ENCODE measurements at regions of chr11 and their contacts with region 1.

Region 1: DNA sequence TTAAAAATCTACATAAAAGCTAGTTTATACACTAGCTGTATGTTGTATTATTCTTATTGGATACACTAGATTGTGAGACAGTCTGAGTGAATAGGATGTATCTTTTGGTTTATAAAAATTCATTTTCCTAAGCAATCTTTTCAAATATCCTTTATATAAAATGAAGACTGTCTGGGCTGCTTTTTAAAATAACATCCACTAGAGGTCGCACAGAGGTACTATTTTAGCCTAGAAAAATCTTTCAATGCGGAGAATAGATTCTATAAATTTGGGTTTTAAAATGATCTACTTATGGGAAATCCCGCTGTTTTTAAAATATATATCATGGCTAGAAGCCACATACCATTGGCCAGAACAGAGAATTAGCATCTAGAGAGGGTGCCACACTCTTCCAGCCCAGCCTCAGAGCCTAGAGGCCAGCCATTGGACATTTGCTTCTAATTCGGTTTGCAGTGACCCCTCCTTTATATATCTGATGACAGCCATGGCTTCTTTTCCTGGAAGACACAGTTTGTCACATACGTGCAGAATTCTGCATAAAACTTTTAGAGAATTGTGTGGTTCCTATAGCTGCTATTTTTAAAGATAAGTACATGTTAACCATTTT is 7.3 kb downstream of the C11orf97 start:
- DNase-seq: no peak
- H3K4me3 ChIP-seq: no peak overlapping the region
- CTCF ChIP-seq: peak; percentile 10

Region 2: GRCh38 chr11:94537031-94537600 is 17.5 kb after region 1 on chr11:
- CTCF ChIA-PET with region 1: interaction called, 39 read pairs
- POLR2A ChIA-PET with region 1: no interaction called
- DNase-seq: peak; percentile 70
- H3K4me3 ChIP-seq: no peak overlapping the region
- CTCF ChIP-seq: no peak

Region 3: DNA sequence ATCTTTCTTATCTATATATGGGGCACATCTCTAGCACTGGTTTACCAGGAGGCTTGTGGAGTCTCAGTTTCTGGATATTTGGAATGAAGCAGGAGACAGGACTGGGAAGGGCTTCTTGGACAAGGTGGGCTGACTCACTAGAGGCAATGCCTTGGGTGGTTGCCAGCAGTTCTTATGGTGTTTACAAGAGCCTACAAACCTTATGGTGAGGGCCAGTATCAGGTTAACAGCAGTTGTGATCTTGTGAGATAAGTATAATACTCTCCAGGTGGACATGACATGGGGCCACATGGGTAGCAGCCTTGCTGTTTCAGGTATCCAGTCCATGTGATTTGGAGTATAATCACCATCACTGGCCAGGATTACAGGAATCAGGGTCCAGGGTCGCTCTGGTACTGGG is 34.4 kb after region 1 on chr11:
- CTCF ChIA-PET with region 1: interaction called, 13 read pairs
- POLR2A ChIA-PET with region 1: no interaction called
- DNase-seq: no peak
- H3K4me3 ChIP-seq: no peak overlapping the region
- CTCF ChIP-seq: no peak

Region 4: GRCh38 chr11:94593030-94593429 is 73.4 kb after region 1 on chr11:
- CTCF ChIA-PET with region 1: interaction called, 154 read pairs
- POLR2A ChIA-PET with region 1: no interaction called
- DNase-seq: no peak
- H3K4me3 ChIP-seq: no peak overlapping the region
- CTCF ChIP-seq: no peak